Left cardiac atrium (tissue), 4 donors: ENCODE measurements at regions of chr1 and their contacts with region 1.

Region 1: GRCh38 chr1:193183019-193183627 is 3.3 kb downstream of the B3GALT2 start:
- DNase-seq: no peak
- ATAC-seq: no peak

Region 2: GRCh38 chr1:192766009-192766625 is 417.0 kb before region 1 on chr1:
- intact Hi-C with region 1: no loop called
- DNase-seq: no peak
- ATAC-seq: no peak

Region 3: GRCh38 chr1:193406901-193407300 is 223.8 kb after region 1 on chr1:
- intact Hi-C with region 1: loop called in 1 of 2 experiments (anchors 5 kb)
- DNase-seq: no peak
- ATAC-seq: peak; percentile 29 to 45

Region 4: GRCh38 chr1:193960499-193960898 is 777.4 kb after region 1 on chr1:
- intact Hi-C with region 1: loop called in 1 of 2 experiments (anchors 10 kb)
- DNase-seq: no peak
- ATAC-seq: peak; percentile 78 to 84

Region 5: GRCh38 chr1:194052514-194053333 is 869.6 kb after region 1 on chr1:
- intact Hi-C with region 1: loop called in 1 of 2 experiments (anchors 10 kb)
- DNase-seq: no peak
- ATAC-seq: no peak

Region 6: DNA sequence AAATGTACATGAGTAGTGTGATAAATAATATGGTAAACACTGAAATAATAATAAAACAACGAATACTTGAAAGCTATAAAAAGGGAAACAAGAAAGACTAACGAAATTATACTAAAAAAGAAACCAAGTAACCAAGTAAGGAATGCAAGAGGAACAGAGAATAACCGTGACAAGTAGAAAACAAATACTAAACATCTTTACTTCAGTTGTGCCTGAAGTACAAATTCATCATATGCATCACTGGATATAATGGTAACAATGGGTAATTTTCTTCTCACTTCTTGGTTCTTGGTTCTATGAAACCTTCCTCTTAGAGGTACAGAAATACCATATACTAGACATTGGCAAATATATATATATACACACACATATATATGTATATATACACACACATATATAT is 1096.9 kb after region 1 on chr1:
- intact Hi-C with region 1: loop called in 1 of 2 experiments (anchors 5 kb)
- DNase-seq: no peak
- ATAC-seq: no peak

Region 7: GRCh38 chr1:194295685-194296084 is 1112.6 kb after region 1 on chr1:
- intact Hi-C with region 1: loop called in 1 of 2 experiments (anchors 5 kb)
- DNase-seq: no peak
- ATAC-seq: peak in 1 of 2 donors; percentile 90